ENCODE measurements at regions of chr4 and their contacts with region 1.

Region 1: GRCh38 chr4:165493359-165493758 is 114.6 kb downstream of the CPE start:
- DNase-seq: peak; percentile 88
- H3K4me3 ChIP-seq: no peak overlapping the region
- H3K27ac ChIP-seq: no peak overlapping the region
- H3K4me1 ChIP-seq: peaks cover 8% of the 10 kb centered on the region
- H3K27me3 ChIP-seq: no peaks in the 10 kb centered on the region
- CTCF ChIP-seq: peak; percentile 92

Region 2: DNA sequence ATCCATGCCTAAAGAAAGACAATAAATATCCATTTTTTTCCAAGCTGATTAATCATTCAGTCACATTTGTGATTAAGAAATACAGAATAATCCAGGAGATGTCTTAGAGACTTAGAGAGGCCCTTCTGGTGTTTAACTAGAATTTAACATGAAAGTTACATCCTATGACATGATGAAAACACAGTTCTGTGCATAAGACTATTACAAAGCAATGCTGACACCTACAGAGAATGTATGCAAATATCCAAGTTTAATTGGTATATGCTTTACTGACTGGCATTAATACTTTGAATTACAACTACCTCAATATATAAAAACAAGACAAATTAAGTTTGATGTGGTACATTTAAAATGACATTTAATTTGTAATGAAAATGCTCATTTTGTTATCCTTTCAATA is 361.8 kb after region 1 on chr4:
- CTCF ChIA-PET with region 1: no interaction called
- POLR2A ChIA-PET with region 1: no interaction called
- intact Hi-C with region 1: loop called (anchors 5 kb)
- DNase-seq: no peak
- H3K4me3 ChIP-seq: no peak overlapping the region
- H3K27ac ChIP-seq: no peak overlapping the region
- H3K4me1 ChIP-seq: peaks cover 11% of the 10 kb centered on the region
- H3K27me3 ChIP-seq: no peaks in the 10 kb centered on the region
- CTCF ChIP-seq: no peak; the same call in 1 of the 2 replicates

Region 3: GRCh38 chr4:166091912-166092510 is 598.7 kb after region 1 on chr4:
- CTCF ChIA-PET with region 1: interaction called, 10 read pairs
- POLR2A ChIA-PET with region 1: no interaction called
- intact Hi-C with region 1: loop called (anchors 2 kb)
- DNase-seq: peak; percentile 59
- H3K4me3 ChIP-seq: no peak overlapping the region
- H3K27ac ChIP-seq: no peak overlapping the region
- H3K4me1 ChIP-seq: peaks cover 10% of the 10 kb centered on the region
- H3K27me3 ChIP-seq: no peaks in the 10 kb centered on the region
- CTCF ChIP-seq: peak; percentile 80

Region 4: DNA sequence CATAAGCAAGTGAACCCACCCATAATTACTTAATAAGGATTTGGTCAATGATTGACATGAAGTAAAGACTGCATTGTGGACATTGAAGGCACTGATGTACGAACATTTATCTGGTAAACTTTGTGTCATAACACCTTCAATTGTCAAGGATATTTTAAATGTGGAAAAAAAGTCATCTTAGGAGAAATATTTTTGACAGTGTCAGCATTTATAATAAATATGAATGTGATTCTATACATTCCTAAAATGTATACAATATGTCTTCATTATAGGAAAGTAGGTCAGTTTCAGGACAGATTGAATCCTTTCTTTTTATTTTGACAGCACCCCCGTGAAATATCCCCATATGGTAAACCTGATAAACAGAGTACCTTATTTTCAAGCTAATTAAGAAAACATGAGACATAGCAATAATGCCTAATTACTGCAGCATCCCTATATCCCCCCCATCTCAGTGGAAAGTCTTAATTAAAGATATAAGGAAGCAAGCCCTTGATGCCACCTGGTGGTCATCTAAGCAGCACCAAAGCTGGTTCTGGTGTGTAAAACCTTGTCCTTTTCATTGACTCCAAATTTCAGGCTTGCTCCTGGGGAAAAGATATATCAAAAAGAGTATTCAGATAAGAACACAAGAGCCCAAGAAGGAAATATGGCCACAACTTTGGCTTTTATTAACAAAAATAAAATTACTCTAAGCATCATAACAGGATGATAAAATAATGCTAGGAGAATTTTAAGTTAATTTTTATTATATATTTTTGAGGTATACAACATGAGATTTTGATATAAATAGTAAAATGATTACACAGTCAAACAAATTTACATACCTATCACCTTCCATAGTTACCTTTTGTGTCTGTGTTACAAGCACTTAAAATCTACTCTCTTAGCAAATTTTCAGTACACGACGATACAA is 759.4 kb after region 1 on chr4:
- CTCF ChIA-PET with region 1: no interaction called
- POLR2A ChIA-PET with region 1: no interaction called
- intact Hi-C with region 1: loop called (anchors 5 kb)
- DNase-seq: peak; percentile 44
- H3K4me3 ChIP-seq: no peak overlapping the region
- H3K27ac ChIP-seq: no peak overlapping the region
- H3K4me1 ChIP-seq: no peaks in the 10 kb centered on the region
- H3K27me3 ChIP-seq: no peaks in the 10 kb centered on the region
- CTCF ChIP-seq: peak; percentile 62

Measured in A673 (cell line).